ENCODE measurements at regions of chr5 and their contacts with region 1.

Region 1: DNA sequence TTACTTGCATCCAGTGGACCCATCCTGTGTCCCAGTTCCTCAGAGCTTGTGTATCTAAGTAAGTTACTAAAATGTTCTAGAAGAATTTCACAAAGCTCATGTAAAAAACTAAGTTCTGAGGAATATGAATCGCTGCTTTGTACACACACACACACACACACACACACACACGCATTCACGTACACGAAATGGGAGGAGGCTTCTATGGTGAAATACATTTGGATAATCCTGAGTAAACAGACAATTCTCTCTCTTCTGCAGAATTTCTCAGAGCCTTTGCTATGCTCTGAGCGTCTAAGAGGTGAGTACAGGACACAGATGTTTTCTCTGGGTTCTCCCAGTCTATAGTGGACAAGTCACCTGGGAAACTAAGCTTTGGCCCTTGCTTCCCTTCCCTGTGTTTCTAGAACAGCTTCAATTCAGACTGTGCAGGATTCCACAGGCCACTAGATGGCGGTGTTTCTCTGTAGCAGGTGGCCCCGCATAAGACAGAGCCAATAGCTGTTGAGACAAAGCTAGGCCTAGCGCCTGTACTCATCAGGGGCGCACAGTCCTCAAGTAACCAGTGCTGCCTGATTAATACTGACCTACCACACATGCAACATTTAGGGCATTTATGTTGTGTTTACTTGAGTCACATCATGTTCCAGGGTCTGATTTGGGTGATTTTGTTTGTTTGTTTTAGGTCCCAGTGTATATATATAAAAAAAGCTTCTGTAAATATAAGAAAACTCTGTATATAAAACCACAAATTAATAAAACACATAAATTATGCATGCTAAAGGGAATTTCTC is 114.8 kb downstream of the LIFR start:
- DNase-seq: peak; percentile 89
- H3K4me3 Mint-ChIP-seq: no peak overlapping the region
- H3K27ac Mint-ChIP-seq: no peak overlapping the region
- H3K4me1 Mint-ChIP-seq: no peaks in the 10 kb centered on the region
- H3K27me3 Mint-ChIP-seq: peaks cover 66% of the 10 kb centered on the region

Region 2: GRCh38 chr5:38382898-38383297 is 58.8 kb before region 1 on chr5:
- CTCF ChIA-PET with region 1: interaction called, 21 read pairs
- DNase-seq: peak; percentile 67
- H3K4me3 Mint-ChIP-seq: no peak overlapping the region
- H3K27ac Mint-ChIP-seq: no peak overlapping the region
- H3K4me1 Mint-ChIP-seq: peaks cover 19% of the 10 kb centered on the region
- H3K27me3 Mint-ChIP-seq: peaks cover 35% of the 10 kb centered on the region

Region 3: GRCh38 chr5:38453506-38453905 is 11.9 kb after region 1 on chr5:
- CTCF ChIA-PET with region 1: interaction called, 26 read pairs
- DNase-seq: peak; percentile 78
- H3K4me3 Mint-ChIP-seq: peak overlapping the region; percentile 1
- H3K27ac Mint-ChIP-seq: peak overlapping the region; percentile 62
- H3K4me1 Mint-ChIP-seq: peaks cover 22% of the 10 kb centered on the region
- H3K27me3 Mint-ChIP-seq: peaks cover 96% of the 10 kb centered on the region

Region 4: GRCh38 chr5:38551030-38552017 is 109.7 kb after region 1 on chr5:
- CTCF ChIA-PET with region 1: interaction called, 32 read pairs
- DNase-seq: no peak
- H3K4me3 Mint-ChIP-seq: no peak overlapping the region
- H3K27ac Mint-ChIP-seq: no peak overlapping the region
- H3K4me1 Mint-ChIP-seq: peaks cover 5% of the 10 kb centered on the region
- H3K27me3 Mint-ChIP-seq: peaks cover 33% of the 10 kb centered on the region

Region 5: DNA sequence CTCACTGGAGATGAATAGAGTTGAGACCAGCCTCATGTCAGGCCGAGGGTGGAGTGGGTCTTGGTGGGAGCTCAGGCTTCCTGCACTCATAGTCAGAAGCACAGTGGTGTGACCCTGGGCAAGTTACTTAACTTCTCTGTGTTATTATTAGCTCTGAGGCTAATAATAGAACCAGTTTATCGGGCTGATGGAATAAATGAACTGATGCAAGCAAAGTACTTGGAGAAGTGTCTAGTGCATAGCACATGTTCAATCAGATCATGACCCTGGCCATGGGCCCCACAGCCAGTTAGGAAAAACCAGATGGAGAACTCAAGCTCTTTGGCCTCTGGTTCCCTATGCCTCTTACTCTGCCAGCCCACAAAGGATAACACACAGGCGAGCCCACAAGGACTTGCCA is 358.9 kb after region 1 on chr5:
- CTCF ChIA-PET with region 1: interaction called, 11 read pairs
- DNase-seq: no peak
- H3K4me3 Mint-ChIP-seq: no peak overlapping the region
- H3K27ac Mint-ChIP-seq: no peak overlapping the region
- H3K4me1 Mint-ChIP-seq: no peaks in the 10 kb centered on the region
- H3K27me3 Mint-ChIP-seq: peaks cover 4% of the 10 kb centered on the region

Region 6: GRCh38 chr5:38814879-38815278 is 373.2 kb after region 1 on chr5:
- CTCF ChIA-PET with region 1: interaction called, 74 read pairs
- DNase-seq: no peak
- H3K4me3 Mint-ChIP-seq: no peak overlapping the region
- H3K27ac Mint-ChIP-seq: no peak overlapping the region
- H3K4me1 Mint-ChIP-seq: peaks cover 9% of the 10 kb centered on the region
- H3K27me3 Mint-ChIP-seq: peaks cover 24% of the 10 kb centered on the region

Measured in activated naive CD4-positive, alpha-beta T cell treated with anti-CD3 and anti-CD28 coated beads, Interleukin-2, amount 10 ng/mL, durations not matched to agents 7 days and 5 days (primary cell).